ENCODE measurements at regions of chr3 and their contacts with region 1.

Region 1: GRCh38 chr3:151003029-151003763 is 30.7 kb upstream of the CLRN1 start:
- DNase-seq: peak; percentile 43
- H3K4me3 ChIP-seq: no peak overlapping the region
- H3K27ac ChIP-seq: no peak overlapping the region
- H3K4me1 ChIP-seq: no peaks in the 10 kb centered on the region
- H3K27me3 ChIP-seq: peaks cover 3% of the 10 kb centered on the region
- CTCF ChIP-seq: no peak

Region 2: DNA sequence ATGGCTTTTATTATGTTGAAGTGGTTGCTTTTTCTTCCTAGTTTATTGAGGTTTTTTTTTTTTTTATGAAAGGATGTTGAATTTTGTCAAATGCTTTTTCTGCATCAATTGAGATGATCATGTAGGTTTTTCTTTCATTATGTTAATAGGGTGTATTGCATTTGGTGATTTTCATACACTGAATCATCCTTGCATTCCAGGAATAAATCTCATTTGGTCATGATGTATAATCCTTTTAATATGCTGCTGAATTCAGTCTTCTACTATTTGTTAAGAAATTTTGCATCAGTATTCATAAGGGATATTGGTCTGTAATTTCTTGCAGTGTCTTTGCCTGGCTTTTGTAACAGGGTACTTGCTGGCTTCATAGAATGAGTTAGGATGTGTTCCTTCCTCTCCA is 19.1 kb before region 1 on chr3:
- CTCF ChIA-PET with region 1: no interaction called
- dilution Hi-C with region 1: no loop called
- in situ Hi-C with region 1: no loop called
- intact Hi-C with region 1: no loop called
- DNase-seq: no peak
- H3K4me3 ChIP-seq: no peak overlapping the region
- H3K27ac ChIP-seq: no peak overlapping the region
- H3K4me1 ChIP-seq: no peaks in the 10 kb centered on the region
- H3K27me3 ChIP-seq: peaks cover 2% of the 10 kb centered on the region
- CTCF ChIP-seq: no peak

Region 3: GRCh38 chr3:151101270-151101969 is 98.2 kb after region 1 on chr3:
- CTCF ChIA-PET with region 1: no interaction called
- dilution Hi-C with region 1: loop called (anchors 5 kb)
- in situ Hi-C with region 1: no loop called
- intact Hi-C with region 1: no loop called
- DNase-seq: no peak
- H3K4me3 ChIP-seq: no peak overlapping the region
- H3K27ac ChIP-seq: no peak overlapping the region
- H3K4me1 ChIP-seq: no peaks in the 10 kb centered on the region
- H3K27me3 ChIP-seq: peaks cover 3% of the 10 kb centered on the region
- CTCF ChIP-seq: no peak

Measured in mammary epithelial cell (primary cell).